Prostate gland (tissue), 2 donors: ENCODE measurements at regions of chr12 and their contacts with region 1.

Region 1: GRCh38 chr12:6613776-6614512 is 6.8 kb upstream of the CHD4 start:
- DNase-seq: peak; percentile 87
- H3K4me3 ChIP-seq: no peak overlapping the region
- H3K27ac ChIP-seq: peak overlapping the region; percentile 86 to 94
- H3K4me1 ChIP-seq: peaks cover 14% of the 10 kb centered on the region
- H3K27me3 ChIP-seq: no peaks in the 10 kb centered on the region
- CTCF ChIP-seq: peak in 1 of 4 experiments; percentile 10
- POLR2A ChIP-seq: peak; percentile 24

Region 2: DNA sequence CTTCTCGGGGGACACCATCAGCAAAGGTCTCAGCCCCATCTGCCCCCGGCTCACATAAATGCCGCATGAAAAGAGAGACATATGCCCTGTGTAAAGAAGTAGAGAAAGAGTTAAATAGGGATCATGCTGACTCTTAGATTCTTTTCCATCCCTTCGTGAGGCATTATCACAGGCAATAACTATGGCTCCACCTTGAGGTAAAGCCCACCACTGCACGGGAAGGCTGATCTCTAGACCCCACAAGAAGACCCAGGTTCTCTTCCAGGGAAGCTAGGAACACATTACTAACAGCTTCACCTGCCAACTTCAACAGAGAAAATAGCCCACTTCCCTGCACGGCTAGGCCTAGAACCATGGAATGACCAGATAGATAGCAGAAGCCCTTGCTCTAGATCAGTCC is 31.7 kb before region 1 on chr12:
- intact Hi-C with region 1: no loop called
- DNase-seq: no peak
- H3K4me3 ChIP-seq: no peak overlapping the region
- H3K27ac ChIP-seq: no peak overlapping the region
- H3K4me1 ChIP-seq: no peaks in the 10 kb centered on the region
- H3K27me3 ChIP-seq: no peaks in the 10 kb centered on the region
- CTCF ChIP-seq: no peak
- POLR2A ChIP-seq: no peak

Region 3: GRCh38 chr12:6662906-6663742 is 49.2 kb after region 1 on chr12 and contains the start of gene ING4:
- intact Hi-C with region 1: loop called (anchors 2 kb)
- DNase-seq: peak; percentile 100
- H3K4me3 ChIP-seq: peak within 1 kb of the TSS; percentile 55 to 83
- H3K27ac ChIP-seq: peak within 1 kb of the TSS; percentile 78
- H3K4me1 ChIP-seq: no peaks in the 10 kb centered on the region
- H3K27me3 ChIP-seq: no peaks in the 10 kb centered on the region
- CTCF ChIP-seq: no peak
- POLR2A ChIP-seq: peak; percentile 45
- total RNA-seq, gene ING4: 75.5 to 78.9 TPM

Region 4: GRCh38 chr12:6688999-6689882 is 75.3 kb after region 1 on chr12 and contains the start of gene ZNF384:
- intact Hi-C with region 1: loop called (anchors 5 kb)
- DNase-seq: peak; percentile 99
- H3K4me3 ChIP-seq: peak within 1 kb of the TSS; percentile 61 to 81
- H3K27ac ChIP-seq: peak within 1 kb of the TSS; percentile 90 to 94
- H3K4me1 ChIP-seq: no peaks in the 10 kb centered on the region
- H3K27me3 ChIP-seq: no peaks in the 10 kb centered on the region
- CTCF ChIP-seq: peak in 2 of 4 experiments; percentile 53 to 79
- POLR2A ChIP-seq: peak; percentile 27
- total RNA-seq, gene ZNF384: 42.9 to 68.6 TPM

Region 5: GRCh38 chr12:6766651-6767349 is 152.9 kb after region 1 on chr12:
- intact Hi-C with region 1: loop called (anchors 5 kb)
- DNase-seq: peak; percentile 83
- H3K4me3 ChIP-seq: peak overlapping the region; percentile 89 to 91
- H3K27ac ChIP-seq: peak overlapping the region; percentile 92 to 99
- H3K4me1 ChIP-seq: peaks cover 12% of the 10 kb centered on the region
- H3K27me3 ChIP-seq: no peaks in the 10 kb centered on the region
- CTCF ChIP-seq: peak; percentile 58 to 91 (median 78)
- POLR2A ChIP-seq: peak; percentile 73

Region 6: DNA sequence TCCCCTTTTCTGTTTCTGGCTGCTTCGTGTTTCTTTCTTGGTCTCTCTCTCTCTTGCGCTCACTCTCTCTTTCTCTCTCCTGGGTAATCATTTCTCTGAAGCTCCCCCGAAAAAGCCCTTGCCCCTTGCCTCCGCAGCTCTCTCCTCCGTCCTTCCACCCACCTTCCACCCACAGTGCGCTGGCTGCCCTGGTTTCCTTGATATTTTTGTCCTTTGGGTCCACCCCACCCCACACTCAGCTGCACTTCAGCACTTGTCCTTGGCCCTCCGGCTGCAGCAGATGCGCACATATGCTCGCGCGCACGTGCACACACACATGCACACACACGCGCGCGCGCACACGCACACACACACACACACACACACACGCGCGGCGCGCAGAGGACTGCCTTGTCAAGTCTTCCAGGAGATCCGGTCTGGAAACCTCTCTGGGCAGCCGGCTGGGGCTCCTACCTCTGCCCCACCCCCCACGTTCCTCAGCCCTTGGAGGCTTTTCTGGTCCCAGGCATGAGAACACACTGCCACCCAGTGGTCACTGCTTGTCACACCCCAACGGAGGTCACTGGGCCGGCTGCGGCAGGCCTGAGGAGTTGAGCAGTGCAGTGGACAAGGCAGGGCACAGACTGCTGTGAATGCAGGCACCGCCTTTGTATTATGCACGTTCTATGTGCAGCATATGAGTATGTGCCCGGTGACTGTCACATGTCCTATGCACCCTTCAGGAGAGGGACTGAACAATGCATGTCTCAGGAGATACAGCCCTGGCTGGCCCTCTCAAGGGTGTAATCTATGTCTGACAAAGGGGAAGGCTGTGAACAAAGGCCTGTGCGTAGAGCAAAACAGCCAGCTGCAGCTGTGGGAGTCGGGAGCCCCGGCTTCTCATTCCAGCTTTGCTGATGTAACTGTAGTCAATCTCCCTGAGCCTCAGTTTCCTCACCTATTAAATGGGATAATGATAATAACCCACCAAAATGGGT is 164.9 kb after region 1 on chr12:
- intact Hi-C with region 1: loop called (anchors 5 kb)
- DNase-seq: peak; percentile 98
- H3K4me3 ChIP-seq: peak overlapping the region; percentile 20 to 34
- H3K27ac ChIP-seq: peak overlapping the region; percentile 89 to 92
- H3K4me1 ChIP-seq: peaks cover 2% of the 10 kb centered on the region
- H3K27me3 ChIP-seq: no peaks in the 10 kb centered on the region
- CTCF ChIP-seq: peak; percentile 93 to 100 (median 98)
- POLR2A ChIP-seq: peak; percentile 52

Region 7: DNA sequence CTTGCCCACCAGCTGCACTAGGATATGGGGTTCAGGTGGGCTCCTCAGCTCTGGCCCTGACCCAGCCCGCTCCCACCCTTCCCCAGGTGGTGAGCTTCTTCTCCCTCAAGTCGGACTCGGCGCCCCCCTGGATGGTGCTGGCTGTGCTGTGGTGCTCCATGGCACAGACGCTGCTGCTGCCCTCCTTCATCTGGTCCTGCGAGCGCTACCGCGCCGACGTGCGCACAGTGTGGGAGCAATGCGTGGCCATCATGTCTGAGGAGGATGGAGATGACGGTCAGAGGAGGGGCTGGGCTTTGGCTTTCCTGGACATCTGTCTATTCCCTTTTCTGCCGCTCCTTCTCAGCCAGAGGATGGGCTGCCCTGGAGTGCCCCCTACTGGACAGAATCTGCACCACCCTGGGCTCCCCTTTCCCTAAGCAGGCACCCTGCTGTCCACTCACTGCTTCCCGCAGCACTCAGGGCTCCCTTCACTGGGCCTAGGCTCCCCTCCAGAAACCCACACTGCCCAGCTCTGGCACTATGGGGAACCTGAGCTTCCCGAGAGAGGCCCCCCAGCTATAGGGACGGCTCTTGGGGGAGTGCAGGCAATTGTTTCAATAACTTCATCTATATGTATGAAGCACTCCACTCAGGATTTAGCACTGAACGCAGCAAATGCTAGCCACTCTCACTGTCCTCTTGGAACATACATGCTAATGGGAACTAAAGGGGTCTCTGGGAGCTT is 211.6 kb after region 1 on chr12:
- intact Hi-C with region 1: loop called (anchors 5 kb)
- DNase-seq: peak; percentile 77
- H3K4me3 ChIP-seq: no peak overlapping the region
- H3K27ac ChIP-seq: no peak overlapping the region
- H3K4me1 ChIP-seq: no peaks in the 10 kb centered on the region
- H3K27me3 ChIP-seq: no peaks in the 10 kb centered on the region
- CTCF ChIP-seq: peak; percentile 89 to 94 (median 93)
- POLR2A ChIP-seq: no peak